Activated CD4-positive, alpha-beta memory T cell treated with anti-CD3 and anti-CD28 coated beads for 36 hours (primary cell): ENCODE measurements at regions of chr5 and their contacts with region 1.

Region 1: DNA sequence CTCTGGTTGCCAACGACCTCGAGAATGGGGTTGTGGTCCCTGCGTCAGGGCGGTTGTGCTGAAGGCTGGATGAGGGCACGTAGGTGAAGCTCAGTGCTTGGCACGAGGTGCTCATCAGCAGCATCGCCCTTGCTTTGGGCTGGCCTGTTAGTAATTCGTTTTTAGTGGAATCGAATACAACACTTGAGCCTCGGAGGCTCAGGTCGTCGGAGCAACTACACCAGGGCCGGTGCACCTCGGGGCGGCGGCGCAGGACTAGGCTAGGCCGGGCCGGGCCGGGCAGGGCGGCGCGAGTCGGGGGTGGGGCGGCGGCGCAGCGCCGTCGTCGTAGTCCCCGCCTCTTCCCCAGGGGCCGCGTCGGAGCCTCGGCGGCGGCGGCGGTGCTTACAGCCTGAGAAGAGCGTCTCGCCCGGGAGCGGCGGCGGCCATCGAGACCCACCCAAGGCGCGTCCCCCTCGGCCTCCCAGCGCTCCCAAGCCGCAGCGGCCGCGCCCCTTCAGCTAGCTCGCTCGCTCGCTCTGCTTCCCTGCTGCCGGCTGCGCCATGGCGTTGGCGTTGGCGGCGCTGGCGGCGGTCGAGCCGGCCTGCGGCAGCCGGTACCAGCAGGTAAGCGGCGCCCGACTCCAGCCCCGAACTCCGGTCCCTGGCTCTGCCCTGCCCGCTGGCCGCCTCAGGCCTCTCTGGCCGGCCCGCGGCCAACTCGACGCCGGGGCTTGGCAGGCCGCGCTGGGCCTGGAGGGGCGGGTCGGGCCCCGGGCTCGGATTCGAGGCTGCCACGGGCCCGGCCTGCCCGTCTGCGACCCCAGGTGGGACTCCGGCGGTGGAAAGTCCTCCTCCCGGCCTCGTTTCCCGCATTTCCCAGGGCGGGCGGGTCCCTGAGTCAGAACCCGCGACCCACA is at the start of gene NDFIP1:
- DNase-seq: peak; percentile 91
- H3K4me3 Mint-ChIP-seq: peak within 1 kb of the TSS; percentile 93
- H3K27ac Mint-ChIP-seq: peak within 1 kb of the TSS; percentile 97
- H3K4me1 Mint-ChIP-seq: peaks cover 71% of the 10 kb centered on the region
- H3K27me3 Mint-ChIP-seq: no peaks in the 10 kb centered on the region
- total RNA-seq, gene NDFIP1: 74.6 to 76.4 TPM

Region 2: DNA sequence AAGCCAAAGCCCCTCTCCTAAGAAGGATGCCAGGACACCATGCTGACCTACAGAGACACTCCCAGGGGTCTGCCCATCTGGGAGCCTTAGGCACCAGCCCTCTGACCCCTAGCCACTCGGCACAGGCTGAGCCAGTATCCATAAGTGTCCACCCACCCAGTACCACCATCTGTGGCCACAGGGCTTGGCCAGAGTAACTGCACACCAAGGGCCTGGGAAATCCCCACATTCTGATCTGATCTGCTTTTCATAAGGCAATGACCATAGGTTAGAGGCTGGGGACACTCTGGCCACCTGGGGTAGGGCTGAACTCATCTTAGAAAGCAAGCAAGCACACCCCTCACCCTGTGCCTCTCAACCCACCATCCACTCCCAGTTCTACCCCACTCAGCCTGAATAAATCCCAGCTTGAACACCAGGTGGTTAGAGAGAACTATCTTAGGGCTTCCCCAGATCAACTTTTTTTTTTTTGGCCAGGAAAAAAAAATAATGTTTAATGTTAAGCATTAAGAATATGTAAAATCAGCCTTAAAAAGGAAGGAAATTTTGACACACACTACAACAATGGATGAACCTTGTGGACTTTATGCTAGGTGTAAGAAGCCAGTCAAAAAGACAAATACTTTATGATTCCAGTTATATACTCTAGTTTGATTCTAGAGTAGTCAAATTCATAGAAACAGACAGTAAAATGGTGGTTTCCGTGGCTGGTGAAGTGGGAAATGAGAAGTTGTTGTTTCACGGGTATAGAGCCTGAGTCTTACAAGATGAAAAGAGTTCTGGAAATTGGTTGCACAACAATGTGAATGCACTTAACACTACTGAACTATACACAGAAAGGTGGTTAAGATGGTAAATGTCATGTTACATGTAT is 102.1 kb before region 1 on chr5:
- CTCF ChIA-PET with region 1: interaction called, 87 read pairs
- POLR2A ChIA-PET with region 1: interaction called, 103 read pairs
- intact Hi-C with region 1: loop called (anchors 2 kb)
- DNase-seq: peak; percentile 58
- H3K4me3 Mint-ChIP-seq: peak overlapping the region; percentile 36
- H3K27ac Mint-ChIP-seq: peak overlapping the region; percentile 96
- H3K4me1 Mint-ChIP-seq: peaks cover 45% of the 10 kb centered on the region
- H3K27me3 Mint-ChIP-seq: no peaks in the 10 kb centered on the region

Region 3: DNA sequence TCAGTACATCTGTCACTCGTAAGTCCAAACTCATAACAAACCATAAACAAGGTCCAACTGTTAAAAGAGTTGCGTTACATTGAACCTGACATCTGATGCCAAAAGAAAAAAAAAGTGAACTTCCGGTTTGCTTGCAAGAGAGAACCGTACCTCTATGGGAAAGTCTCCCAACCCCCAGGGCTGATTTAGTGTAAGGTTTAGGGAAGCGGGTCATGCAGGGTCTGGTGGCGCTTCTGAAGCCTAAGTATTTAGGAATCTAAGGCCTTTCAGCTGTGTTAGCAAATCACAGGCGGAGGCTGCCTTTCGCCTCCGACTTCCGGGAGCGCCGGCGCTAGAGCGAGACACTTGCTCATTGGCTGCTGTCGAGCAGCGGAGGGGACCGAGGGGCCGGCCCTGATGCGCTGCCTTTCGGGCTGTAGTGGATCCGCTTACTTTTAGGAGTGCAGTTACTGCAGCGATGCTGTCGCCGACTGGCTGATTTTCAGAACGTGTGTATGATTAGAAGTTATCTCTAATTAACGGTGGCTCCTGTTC is 83.8 kb before region 1 on chr5:
- CTCF ChIA-PET with region 1: interaction called, 9 read pairs
- POLR2A ChIA-PET with region 1: interaction called, 13 read pairs
- intact Hi-C with region 1: loop called (anchors 2 kb)
- DNase-seq: peak; percentile 93
- H3K4me3 Mint-ChIP-seq: peak overlapping the region; percentile 88
- H3K27ac Mint-ChIP-seq: peak overlapping the region; percentile 99
- H3K4me1 Mint-ChIP-seq: peaks cover 17% of the 10 kb centered on the region
- H3K27me3 Mint-ChIP-seq: no peaks in the 10 kb centered on the region

Region 4: GRCh38 chr5:142087920-142088679 is 20.6 kb before region 1 on chr5:
- CTCF ChIA-PET with region 1: interaction called, 5 read pairs
- POLR2A ChIA-PET with region 1: interaction called, 84 read pairs
- intact Hi-C with region 1: loop called (anchors 1 kb)
- DNase-seq: peak; percentile 88
- H3K4me3 Mint-ChIP-seq: peak overlapping the region; percentile 61
- H3K27ac Mint-ChIP-seq: peak overlapping the region; percentile 95
- H3K4me1 Mint-ChIP-seq: peaks cover 61% of the 10 kb centered on the region
- H3K27me3 Mint-ChIP-seq: no peaks in the 10 kb centered on the region

Region 5: GRCh38 chr5:142095651-142096330 is 12.9 kb before region 1 on chr5:
- CTCF ChIA-PET with region 1: interaction called, 48 read pairs
- POLR2A ChIA-PET with region 1: interaction called, 84 read pairs
- intact Hi-C with region 1: loop called (anchors 1 kb)
- DNase-seq: peak; percentile 93
- H3K4me3 Mint-ChIP-seq: peak overlapping the region; percentile 48
- H3K27ac Mint-ChIP-seq: peak overlapping the region; percentile 95
- H3K4me1 Mint-ChIP-seq: peaks cover 63% of the 10 kb centered on the region
- H3K27me3 Mint-ChIP-seq: no peaks in the 10 kb centered on the region

Region 6: GRCh38 chr5:142120247-142120935 is 11.7 kb after region 1 on chr5:
- CTCF ChIA-PET with region 1: interaction called, 4 read pairs
- POLR2A ChIA-PET with region 1: interaction called, 5 read pairs
- intact Hi-C with region 1: loop called (anchors 1 kb)
- DNase-seq: no peak
- H3K4me3 Mint-ChIP-seq: no peak overlapping the region
- H3K27ac Mint-ChIP-seq: peak overlapping the region; percentile 72
- H3K4me1 Mint-ChIP-seq: peaks cover 76% of the 10 kb centered on the region
- H3K27me3 Mint-ChIP-seq: no peaks in the 10 kb centered on the region

Region 7: DNA sequence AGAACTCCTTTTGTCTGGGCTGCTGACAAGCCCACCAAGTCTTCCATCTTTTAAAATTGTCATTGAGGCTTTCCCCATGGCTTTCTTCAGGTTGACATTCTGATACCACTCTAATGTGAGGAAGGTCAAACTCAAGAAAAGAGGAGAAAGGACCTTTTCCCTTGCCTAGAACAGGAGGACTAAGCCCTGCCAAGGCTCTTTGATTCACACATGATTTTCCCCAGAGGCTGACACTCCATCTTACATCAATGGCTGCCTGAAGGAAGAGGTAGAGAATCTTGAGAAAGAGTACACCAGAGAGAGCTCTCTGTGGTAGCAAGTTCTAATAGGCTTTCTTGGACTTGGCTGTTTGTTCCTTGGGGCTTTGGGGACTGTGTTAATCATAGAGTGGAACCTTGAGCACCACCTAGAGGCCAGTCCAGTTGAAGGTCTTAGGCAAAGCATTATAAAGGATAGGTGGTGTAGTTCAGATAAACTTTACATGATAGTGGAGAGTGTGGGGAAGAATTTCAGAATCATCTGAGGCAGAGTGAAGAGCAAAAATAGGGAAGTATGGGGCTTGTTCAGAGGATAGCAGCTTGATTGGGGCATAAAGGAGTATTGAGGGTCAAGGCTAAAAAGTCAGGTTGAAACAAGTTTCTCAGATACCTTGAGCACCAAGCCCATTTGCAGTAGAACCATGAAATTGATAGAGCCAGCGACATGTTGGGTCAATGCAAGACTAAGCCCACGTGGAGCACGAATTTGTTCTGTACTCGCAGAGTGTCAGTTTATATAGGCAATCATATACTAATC is 36.6 kb after region 1 on chr5:
- CTCF ChIA-PET with region 1: interaction called, 10 read pairs
- POLR2A ChIA-PET with region 1: interaction called, 7 read pairs
- intact Hi-C with region 1: loop called (anchors 5 kb)
- DNase-seq: peak; percentile 67
- H3K4me3 Mint-ChIP-seq: no peak overlapping the region
- H3K27ac Mint-ChIP-seq: no peak overlapping the region
- H3K4me1 Mint-ChIP-seq: peaks cover 2% of the 10 kb centered on the region
- H3K27me3 Mint-ChIP-seq: no peaks in the 10 kb centered on the region

Region 8: DNA sequence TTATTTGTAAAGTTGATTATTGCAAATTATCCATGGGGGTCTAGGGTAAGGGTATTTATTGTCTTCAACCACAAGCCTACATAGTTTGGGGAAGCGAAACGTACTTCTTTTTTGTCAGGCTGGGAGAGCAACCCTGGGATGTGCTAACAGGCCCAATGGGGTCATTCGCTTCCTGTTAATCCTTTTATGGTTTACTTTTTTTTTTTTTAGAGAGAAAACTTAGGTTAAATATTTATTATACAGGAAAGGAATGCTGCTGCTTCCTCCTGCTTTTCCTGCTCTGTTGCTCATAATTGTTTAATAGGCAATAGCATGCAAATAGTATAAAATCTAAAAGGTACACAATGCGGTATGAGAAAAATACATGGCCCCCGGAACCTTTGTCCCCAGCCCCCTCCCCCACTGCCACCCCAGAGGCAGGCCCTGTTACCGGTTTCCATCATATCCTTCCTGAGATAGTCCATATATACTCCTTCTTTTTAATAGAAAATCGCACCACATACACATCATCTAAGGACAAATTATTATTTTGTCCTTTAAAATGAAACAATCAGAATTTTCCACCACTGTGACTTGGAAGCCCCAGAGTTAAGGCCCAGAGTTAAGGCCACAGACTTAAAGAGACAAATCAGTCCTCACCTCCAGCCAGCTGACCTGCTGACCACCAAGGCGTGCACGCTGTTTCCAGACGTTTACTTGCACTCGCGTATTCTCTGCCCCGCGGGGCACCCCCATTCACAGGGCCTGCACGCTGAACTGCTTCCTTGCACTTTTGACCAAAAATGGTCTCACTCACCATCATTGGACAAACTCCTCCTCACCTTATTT is 83.8 kb after region 1 on chr5:
- CTCF ChIA-PET with region 1: no interaction called
- POLR2A ChIA-PET with region 1: no interaction called
- intact Hi-C with region 1: no loop called
- DNase-seq: no peak
- H3K4me3 Mint-ChIP-seq: no peak overlapping the region
- H3K27ac Mint-ChIP-seq: no peak overlapping the region
- H3K4me1 Mint-ChIP-seq: no peaks in the 10 kb centered on the region
- H3K27me3 Mint-ChIP-seq: no peaks in the 10 kb centered on the region